ENCODE measurements at regions of chr11 and their contacts with region 1.

Region 1: DNA sequence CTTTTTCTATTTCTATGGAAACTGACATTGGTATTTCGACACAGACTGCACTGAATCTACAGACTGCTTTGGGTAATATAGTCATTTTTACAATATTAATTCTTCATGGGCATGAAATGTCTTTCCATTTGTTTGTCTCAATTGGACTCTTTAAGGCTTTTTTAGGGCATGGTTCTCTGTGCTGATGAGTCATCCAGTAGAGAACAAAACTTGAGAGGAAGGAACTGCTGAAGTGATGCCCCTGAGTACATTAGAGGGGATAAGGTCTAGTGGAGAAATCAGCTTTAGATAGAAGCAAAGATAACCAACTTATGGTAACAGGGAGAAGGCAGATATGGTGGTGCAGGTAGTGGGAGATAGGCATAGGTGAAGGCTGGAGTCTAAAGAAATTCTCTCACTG is 25.1 kb downstream of the TSG101 start:
- DNase-seq: no peak
- ATAC-seq: no peak
- H3K4me3 ChIP-seq: no peak overlapping the region
- H3K27ac ChIP-seq: no peak overlapping the region
- H3K4me1 ChIP-seq: no peaks in the 10 kb centered on the region
- H3K27me3 ChIP-seq: no peaks in the 10 kb centered on the region
- CTCF ChIP-seq: no peak

Region 2: DNA sequence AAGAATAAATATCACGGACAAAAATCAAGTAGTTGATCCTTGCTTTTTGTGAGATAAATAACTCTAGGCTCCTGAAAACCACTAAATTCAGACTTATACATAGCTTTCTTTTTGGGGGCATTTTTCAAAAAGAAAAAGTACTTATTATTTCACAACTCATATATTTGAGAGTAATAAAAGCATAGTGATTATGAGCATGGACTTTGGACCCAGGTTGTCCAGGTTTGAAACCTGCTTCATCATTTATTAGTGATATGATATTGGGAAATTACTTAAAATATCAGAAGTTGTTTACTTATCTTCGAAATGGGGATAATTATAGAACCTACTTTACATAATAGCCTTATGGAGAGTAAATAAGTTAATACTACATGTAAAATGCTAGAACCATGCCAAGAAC is 62.9 kb before region 1 on chr11:
- CTCF ChIA-PET with region 1: no interaction called
- POLR2A ChIA-PET with region 1: no interaction called
- intact Hi-C with region 1: no loop called
- DNase-seq: no peak
- ATAC-seq: no peak
- H3K4me3 ChIP-seq: no peak overlapping the region
- H3K27ac ChIP-seq: no peak overlapping the region
- H3K4me1 ChIP-seq: no peaks in the 10 kb centered on the region
- H3K27me3 ChIP-seq: no peaks in the 10 kb centered on the region
- CTCF ChIP-seq: no peak

Region 3: GRCh38 chr11:18479063-18479462 is 22.6 kb before region 1 on chr11:
- CTCF ChIA-PET with region 1: no interaction called
- POLR2A ChIA-PET with region 1: interaction called, 10 read pairs
- intact Hi-C with region 1: no loop called
- DNase-seq: no peak
- ATAC-seq: no peak
- H3K4me3 ChIP-seq: no peak overlapping the region
- H3K27ac ChIP-seq: no peak overlapping the region
- H3K4me1 ChIP-seq: no peaks in the 10 kb centered on the region
- H3K27me3 ChIP-seq: no peaks in the 10 kb centered on the region
- CTCF ChIP-seq: no peak